HEK293 (cell line): ENCODE measurements at regions of chr9 and their contacts with region 1.

Region 1: DNA sequence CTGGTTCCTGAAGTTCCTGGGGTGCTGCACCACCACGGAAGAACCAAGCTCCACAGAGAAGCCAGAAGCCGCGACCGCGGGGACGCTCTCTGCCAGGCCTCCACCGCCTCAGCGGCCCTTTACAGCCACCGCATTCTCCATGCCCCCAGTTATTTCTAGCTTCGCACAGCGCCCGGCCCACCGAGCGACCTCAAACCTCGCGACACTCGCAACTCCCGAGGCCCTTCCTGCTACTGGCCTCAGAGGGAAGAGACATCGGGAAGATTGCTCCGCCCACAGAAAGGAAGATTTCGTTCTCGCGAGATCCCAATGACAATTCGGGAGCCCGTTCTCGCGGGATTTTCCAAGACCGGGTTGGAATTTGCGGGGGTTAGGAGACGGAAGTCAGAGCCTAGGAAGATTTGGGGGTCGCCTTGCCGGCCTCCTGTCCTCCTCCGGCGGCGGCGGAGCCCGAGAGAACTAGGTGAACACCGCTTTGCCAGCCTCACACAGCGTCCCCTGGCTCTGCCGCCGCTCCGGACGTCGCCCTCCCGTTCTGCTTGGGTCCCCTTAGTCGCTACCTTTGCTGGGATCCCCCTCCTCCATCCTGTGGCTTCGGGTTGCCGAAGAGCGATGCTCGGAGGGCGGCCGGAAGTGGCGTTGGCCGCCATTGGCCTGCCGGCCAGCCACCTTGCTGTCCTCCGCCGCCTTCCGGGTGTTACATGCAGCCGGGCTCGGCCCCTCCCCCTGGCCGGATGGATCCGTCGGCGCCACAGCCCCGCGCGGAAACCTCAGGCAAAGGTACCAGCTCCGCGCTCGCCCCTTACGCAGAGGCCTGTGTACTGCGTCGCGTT is at the start of gene ERCC6L2:
- H3K4me3 ChIP-seq: no peak within 1 kb of the TSS
- H3K27ac ChIP-seq: no peak within 1 kb of the TSS
- H3K4me1 ChIP-seq: peaks cover 5% of the 10 kb centered on the region; the same call in 1 of the 2 replicates
- CTCF ChIP-seq: 0 out of 2 replicates have a peak, but pooled peaks have one; percentile 17

Region 2: GRCh38 chr9:95721061-95721531 is 154.4 kb before region 1 on chr9:
- CTCF ChIA-PET with region 1: no interaction called
- POLR2A ChIA-PET with region 1: no interaction called
- H3K4me3 ChIP-seq: no peak overlapping the region
- H3K27ac ChIP-seq: peak overlapping the region; percentile 61
- H3K4me1 ChIP-seq: peaks cover 12% of the 10 kb centered on the region
- CTCF ChIP-seq: no peak

Region 3: GRCh38 chr9:95845751-95846150 is 29.8 kb before region 1 on chr9:
- CTCF ChIA-PET with region 1: no interaction called
- POLR2A ChIA-PET with region 1: no interaction called
- H3K4me3 ChIP-seq: no peak overlapping the region
- H3K27ac ChIP-seq: no peak overlapping the region
- H3K4me1 ChIP-seq: no peaks in the 10 kb centered on the region
- CTCF ChIP-seq: no peak

Region 4: DNA sequence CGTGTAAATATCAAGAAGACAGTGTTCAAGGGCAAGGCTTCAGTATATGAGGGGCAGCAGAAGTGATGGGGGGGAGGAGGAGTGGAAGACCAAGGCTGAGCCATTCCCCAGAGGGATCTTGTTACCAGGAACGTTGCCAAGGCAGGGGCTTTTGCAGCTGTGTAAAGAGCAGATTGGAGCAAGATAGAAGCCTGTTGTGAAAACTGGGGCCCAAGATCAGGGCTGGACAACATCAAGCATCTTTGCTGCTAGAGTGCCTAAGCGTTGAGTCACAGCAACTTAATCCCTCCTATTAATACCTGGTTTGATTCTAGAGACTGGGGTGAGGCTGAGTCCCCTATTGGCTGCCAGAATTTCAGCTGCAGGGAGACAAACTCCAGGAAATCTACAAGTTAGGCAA is 18.4 kb before region 1 on chr9:
- CTCF ChIA-PET with region 1: interaction called, 3 read pairs
- POLR2A ChIA-PET with region 1: interaction called, 10 read pairs
- H3K4me3 ChIP-seq: no peak overlapping the region
- H3K27ac ChIP-seq: no peak overlapping the region
- H3K4me1 ChIP-seq: peaks cover 19% of the 10 kb centered on the region; the same call in 1 of the 2 replicates
- CTCF ChIP-seq: no peak

Region 5: GRCh38 chr9:96217754-96218693 is 342.5 kb after region 1 on chr9:
- CTCF ChIA-PET with region 1: interaction called, 7 read pairs
- POLR2A ChIA-PET with region 1: interaction called, 10 read pairs
- H3K4me3 ChIP-seq: peak overlapping the region; percentile 2; the same call in 1 of the 2 replicates
- H3K27ac ChIP-seq: peak overlapping the region; percentile 83
- H3K4me1 ChIP-seq: peaks cover 5% of the 10 kb centered on the region; the same call in 1 of the 2 replicates
- CTCF ChIP-seq: peak; percentile 74